ENCODE measurements at regions of chr1 and their contacts with region 1.

Region 1: GRCh38 chr1:17494114-17494729 is 45.3 kb upstream of the ARHGEF10L start:
- DNase-seq: peak; percentile 49
- ATAC-seq: peak; percentile 85
- H3K4me3 Mint-ChIP-seq: no peak overlapping the region
- H3K27ac Mint-ChIP-seq: no peak overlapping the region
- H3K4me1 Mint-ChIP-seq: no peaks in the 10 kb centered on the region
- H3K27me3 Mint-ChIP-seq: no peaks in the 10 kb centered on the region
- CTCF ChIP-seq: no peak

Region 2: DNA sequence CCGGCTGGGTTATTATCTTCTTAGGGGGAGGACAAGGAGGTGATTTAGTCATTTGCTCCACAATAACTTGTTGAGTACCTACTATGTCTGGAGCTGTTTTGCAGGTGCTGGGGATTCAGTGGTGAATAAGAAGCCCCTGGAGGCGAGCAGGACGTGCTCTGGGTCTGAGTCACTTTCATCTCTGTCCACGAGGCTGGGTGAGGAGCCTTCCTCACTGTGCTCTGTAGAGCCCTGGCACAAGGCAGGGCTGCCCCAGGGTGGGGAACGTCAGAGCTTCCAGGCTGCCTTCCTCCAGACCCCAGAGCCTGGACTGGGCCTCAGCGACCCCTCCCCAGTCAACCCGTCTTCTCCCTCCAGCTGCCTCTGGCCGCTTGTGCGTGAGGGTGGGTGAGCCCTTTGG is 124.8 kb before region 1 on chr1:
- CTCF ChIA-PET with region 1: no interaction called
- POLR2A ChIA-PET with region 1: no interaction called
- intact Hi-C with region 1: no loop called
- DNase-seq: no peak
- ATAC-seq: no peak
- H3K4me3 Mint-ChIP-seq: no peak overlapping the region
- H3K27ac Mint-ChIP-seq: no peak overlapping the region
- H3K4me1 Mint-ChIP-seq: no peaks in the 10 kb centered on the region
- H3K27me3 Mint-ChIP-seq: peaks cover 4% of the 10 kb centered on the region
- CTCF ChIP-seq: no peak

Region 3: DNA sequence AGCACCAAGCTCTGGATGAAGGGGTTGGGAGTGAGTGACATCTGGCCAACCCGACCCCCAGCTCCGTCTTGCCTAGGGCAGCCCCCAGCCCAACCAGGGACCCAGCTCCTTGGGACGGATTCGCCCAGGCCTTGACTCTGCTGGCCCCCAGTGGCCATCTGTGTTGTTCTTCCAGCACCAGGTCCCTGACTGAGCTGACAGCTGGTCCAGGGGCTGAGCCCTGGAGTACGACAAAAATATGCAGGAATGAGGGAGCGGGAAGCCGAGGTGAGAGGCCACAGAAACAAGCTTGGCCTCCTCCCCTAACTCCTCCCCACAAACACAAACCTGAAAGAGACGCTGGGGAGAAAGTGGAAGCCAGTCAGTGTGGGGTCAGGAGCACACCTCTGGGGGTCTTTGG is 1081.4 kb after region 1 on chr1:
- CTCF ChIA-PET with region 1: no interaction called
- POLR2A ChIA-PET with region 1: no interaction called
- intact Hi-C with region 1: loop called (anchors 5 kb)
- DNase-seq: peak; percentile 28
- ATAC-seq: no peak
- H3K4me3 Mint-ChIP-seq: no peak overlapping the region
- H3K27ac Mint-ChIP-seq: no peak overlapping the region
- H3K4me1 Mint-ChIP-seq: peaks cover 13% of the 10 kb centered on the region
- H3K27me3 Mint-ChIP-seq: peaks cover 11% of the 10 kb centered on the region
- CTCF ChIP-seq: no peak